Naive thymus-derived CD8-positive, alpha-beta T cell (primary cell): ENCODE measurements at regions of chr5 and their contacts with region 1.

Region 1: DNA sequence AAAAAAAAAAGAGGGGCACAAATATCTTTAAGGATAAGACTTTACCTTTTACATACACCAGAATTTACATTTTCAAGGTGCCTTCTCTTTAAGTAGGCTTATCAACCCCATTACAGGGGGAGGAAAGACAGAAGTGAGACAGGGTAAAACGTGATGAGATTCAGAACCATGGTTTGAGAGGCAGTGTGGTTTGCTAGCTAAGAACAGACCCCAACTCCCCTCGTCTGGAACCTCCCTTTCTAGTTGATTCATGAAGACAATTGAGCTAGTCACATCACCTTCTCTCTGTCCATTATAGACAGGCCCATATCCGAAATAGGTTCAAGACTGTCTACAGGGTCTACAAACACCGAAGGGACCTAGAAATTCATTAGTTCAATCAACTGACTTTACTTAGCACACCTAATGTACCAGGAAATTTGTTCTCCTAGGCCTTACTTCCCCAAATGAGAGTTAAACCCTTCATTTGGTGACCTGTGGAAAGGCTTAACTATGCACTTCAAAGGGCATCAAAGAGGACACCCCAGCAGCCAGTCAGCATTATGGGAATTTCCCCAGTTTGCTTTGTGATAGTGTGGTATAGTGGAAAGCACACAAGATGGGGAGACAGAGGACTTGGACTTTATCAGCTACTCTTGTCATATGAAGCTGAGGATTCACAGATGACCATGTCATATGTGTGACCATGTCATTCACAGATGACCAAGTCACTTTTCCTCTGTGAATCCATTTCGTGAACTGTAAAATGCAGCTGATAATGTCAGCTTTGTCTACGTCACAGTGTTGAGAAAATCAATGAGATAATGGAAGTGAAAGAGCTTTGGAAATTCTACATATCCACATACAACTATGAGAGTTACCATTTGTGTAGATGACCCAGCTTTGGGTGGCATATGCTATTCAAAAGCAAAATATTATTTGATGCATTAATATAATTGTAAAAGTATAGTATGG is 40.2 kb upstream of the CYFIP2 start:
- DNase-seq: peak in 1 of 10 donors; percentile 32
- ATAC-seq: peak; percentile 23 to 24
- H3K4me3 Mint-ChIP-seq: peak overlapping the region in 9 of 10 donors; percentile 2 to 66 (median 33)
- H3K27ac Mint-ChIP-seq: peak overlapping the region; percentile 65 to 92 (median 82)
- H3K4me1 Mint-ChIP-seq: peaks cover 25 to 69% (median 46%) of the 10 kb centered on the region in 4 donors
- H3K27me3 Mint-ChIP-seq: no peaks in the 10 kb centered on the region

Region 2: DNA sequence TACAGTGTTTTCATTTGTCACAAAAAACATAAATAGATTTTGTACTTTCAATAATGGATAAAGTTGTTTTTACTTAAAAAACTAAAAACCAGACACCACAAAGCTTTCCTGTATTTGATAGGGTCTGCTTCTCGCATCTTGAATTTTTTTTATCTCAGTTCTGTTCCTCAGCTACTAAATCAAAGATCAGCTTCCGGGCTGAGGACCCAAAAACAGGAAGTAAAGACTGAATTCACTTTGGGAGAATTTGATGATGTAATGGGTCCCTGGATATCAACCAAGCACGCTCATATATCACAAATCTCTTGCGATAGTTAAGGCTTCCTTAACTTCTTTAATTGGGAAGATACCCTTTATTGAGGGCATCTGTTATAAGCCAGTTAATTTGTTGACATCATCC is 21.0 kb before region 1 on chr5:
- POLR2A ChIA-PET with region 1: interaction called, 990 read pairs
- DNase-seq: peak in 4 of 10 donors; percentile 41 to 74 (median 58)
- ATAC-seq: peak; percentile 61 to 76
- H3K4me3 Mint-ChIP-seq: peak overlapping the region; percentile 62 to 82 (median 68)
- H3K27ac Mint-ChIP-seq: peak overlapping the region; percentile 86 to 98 (median 93)
- H3K4me1 Mint-ChIP-seq: peaks cover 37 to 92% (median 83%) of the 10 kb centered on the region in 4 donors
- H3K27me3 Mint-ChIP-seq: no peaks in the 10 kb centered on the region